Sciatic nerve (tissue), 2 donors: ENCODE measurements at regions of chr4 and their contacts with region 1.

Region 1: GRCh38 chr4:87679449-87680169 is 29.5 kb downstream of the DMP1 start:
- DNase-seq: peak; percentile 73
- ATAC-seq: peak; percentile 78

Region 2: DNA sequence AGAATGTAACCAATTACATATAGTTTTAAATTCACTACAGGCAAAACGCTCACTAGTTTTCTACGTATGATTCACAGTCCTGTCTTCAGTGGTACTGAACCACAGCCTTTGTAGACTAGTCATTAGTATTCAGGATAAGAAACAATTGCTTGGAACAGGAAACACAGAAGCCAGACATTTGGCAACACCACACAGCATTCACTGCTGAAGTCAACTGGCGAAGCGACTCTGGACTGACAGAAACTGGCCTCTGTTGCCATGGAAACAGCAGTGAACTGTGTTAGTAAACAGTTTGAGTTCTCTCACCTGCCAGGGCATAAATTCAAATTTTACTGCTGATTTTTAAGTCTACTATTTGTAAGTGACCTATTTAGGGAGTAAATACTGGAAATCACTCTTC is 1377.4 kb before region 1 on chr4:
- intact Hi-C with region 1: no loop called
- DNase-seq: no peak
- ATAC-seq: no peak

Region 3: GRCh38 chr4:86653237-86653865 is 1026.3 kb before region 1 on chr4:
- intact Hi-C with region 1: no loop called
- DNase-seq: no peak
- ATAC-seq: no peak

Region 4: GRCh38 chr4:87838890-87839591 is 159.4 kb after region 1 on chr4:
- intact Hi-C with region 1: loop called (anchors 5 kb)
- DNase-seq: no peak
- ATAC-seq: peak; percentile 70